ENCODE measurements at regions of chr13 and their contacts with region 1.

Region 1: GRCh38 chr13:101127741-101128353 is 288.5 kb downstream of the NALCN start:
- DNase-seq: peak in 2 of 10 donors; percentile 11 to 21

Region 2: GRCh38 chr13:99656092-99656745 is 1471.6 kb before region 1 on chr13:
- intact Hi-C with region 1: loop called (anchors 10 kb)
- DNase-seq: peak in 8 of 10 donors; percentile 58 to 95 (median 84)

Region 3: DNA sequence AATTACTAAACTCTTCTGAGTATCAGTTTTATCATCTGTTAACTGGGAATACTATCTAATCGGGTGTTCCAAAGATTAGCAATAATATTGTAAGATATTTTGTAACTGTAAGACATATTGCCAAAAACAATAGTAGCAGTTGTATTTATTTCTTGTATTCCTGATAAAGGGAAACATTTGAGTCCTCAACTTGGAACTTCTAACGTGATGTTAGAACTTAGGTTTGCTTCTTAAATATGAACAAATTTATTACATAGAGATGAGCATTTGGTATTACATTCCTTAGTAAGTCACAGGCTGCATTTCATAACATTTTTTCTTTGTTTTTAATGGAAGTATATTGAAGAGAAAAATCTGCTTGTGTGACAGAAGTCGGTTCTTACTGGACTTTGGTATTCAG is 63.1 kb after region 1 on chr13:
- intact Hi-C with region 1: no loop called
- DNase-seq: no peak

Region 4: DNA sequence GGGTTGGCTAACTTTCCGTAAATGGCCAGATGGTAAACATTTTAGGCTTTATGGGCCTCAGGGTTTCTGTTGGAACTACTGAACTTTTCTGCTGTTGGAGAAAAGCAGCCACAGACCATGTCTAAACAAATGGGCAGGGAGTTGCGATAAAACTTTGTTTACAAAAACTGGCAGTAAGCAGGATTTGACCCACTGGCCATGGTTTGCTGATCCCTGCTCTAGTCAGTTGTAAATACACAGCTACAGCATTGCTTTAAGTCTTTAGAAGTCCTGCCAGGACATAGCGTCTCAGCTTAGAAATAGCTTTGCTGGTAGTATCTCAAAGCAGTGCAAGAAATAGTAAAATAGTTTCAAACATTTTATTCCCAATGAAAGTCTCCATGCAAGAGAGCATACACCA is 200.0 kb after region 1 on chr13:
- intact Hi-C with region 1: no loop called
- DNase-seq: no peak